CD8-positive, alpha-beta memory T cell (primary cell): ENCODE measurements at regions of chr4 and their contacts with region 1.

Region 1: DNA sequence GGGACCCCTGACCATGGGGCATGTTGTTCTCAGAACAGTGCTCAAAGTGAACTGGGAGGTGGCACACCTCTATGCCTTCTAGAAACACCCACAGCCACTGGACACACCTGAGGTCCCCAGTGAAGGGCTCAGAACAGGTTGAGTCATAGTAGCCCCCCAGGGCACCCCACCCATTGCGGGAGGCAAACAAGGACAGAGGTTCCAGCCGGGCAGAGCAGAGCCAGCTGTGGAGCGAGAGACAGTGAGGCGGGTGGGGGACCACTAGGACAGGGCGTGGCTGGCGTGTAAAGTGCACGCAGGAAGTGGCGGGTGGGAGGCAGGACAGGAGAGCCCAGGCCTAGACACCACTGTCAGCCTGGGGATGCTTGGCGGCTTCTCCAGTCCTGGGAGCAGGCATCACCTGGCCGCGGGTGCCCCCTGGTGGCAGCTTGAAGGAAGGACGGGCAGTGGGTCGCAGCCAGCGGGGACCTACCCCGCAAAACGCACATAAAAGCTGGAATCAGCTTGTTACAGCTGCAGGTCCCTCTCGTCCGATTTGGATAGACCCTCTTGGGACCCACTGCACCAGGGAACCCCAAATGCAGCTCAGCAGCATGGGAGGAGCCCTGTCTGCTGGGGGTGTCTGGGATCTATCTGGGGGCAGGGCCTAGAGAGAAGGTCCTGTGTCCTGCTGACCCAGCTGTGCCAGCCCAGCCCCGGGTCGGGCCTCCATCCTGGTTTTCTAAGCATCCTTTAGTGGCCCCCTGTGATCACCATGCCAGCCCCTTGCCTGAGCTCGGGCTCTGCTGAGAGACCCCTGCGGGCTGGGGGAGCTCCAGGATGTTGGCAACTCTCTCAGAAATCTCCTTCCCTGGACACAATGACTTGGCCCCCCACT is 57.6 kb downstream of the WFS1 start:
- DNase-seq: peak; percentile 65 to 83 (median 71)
- H3K4me3 ChIP-seq: no peak overlapping the region
- H3K4me3 Mint-ChIP-seq: no peak overlapping the region
- H3K27ac ChIP-seq: no peak overlapping the region
- H3K27ac Mint-ChIP-seq: no peak overlapping the region
- H3K4me1 ChIP-seq: no peaks in the 10 kb centered on the region
- H3K4me1 Mint-ChIP-seq: no peaks in the 10 kb centered on the region
- H3K27me3 ChIP-seq: no peaks in the 10 kb centered on the region
- H3K27me3 Mint-ChIP-seq: peaks cover 11 to 47% of the 10 kb centered on the region in 2 donors

Region 2: GRCh38 chr4:5998333-5998936 is 328.8 kb before region 1 on chr4:
- CTCF ChIA-PET with region 1: interaction called, 35 read pairs
- POLR2A ChIA-PET with region 1: no interaction called
- DNase-seq: peak in 4 of 5 donors; percentile 11 to 39 (median 28)
- H3K4me3 ChIP-seq: no peak overlapping the region
- H3K4me3 Mint-ChIP-seq: no peak overlapping the region
- H3K27ac ChIP-seq: no peak overlapping the region
- H3K27ac Mint-ChIP-seq: no peak overlapping the region
- H3K4me1 ChIP-seq: no peaks in the 10 kb centered on the region
- H3K4me1 Mint-ChIP-seq: peaks cover 0 to 5% (median 0%) of the 10 kb centered on the region in 3 donors
- H3K27me3 ChIP-seq: no peaks in the 10 kb centered on the region
- H3K27me3 Mint-ChIP-seq: peaks cover 0 to 7% of the 10 kb centered on the region in 2 donors

Region 3: GRCh38 chr4:6264225-6264540 is 63.1 kb before region 1 on chr4:
- CTCF ChIA-PET with region 1: interaction called, 14 read pairs
- POLR2A ChIA-PET with region 1: interaction called, 3 read pairs
- DNase-seq: peak in 1 of 5 donors; percentile 53
- H3K4me3 ChIP-seq: no peak overlapping the region
- H3K4me3 Mint-ChIP-seq: no peak overlapping the region
- H3K27ac ChIP-seq: no peak overlapping the region
- H3K27ac Mint-ChIP-seq: no peak overlapping the region
- H3K4me1 ChIP-seq: no peaks in the 10 kb centered on the region
- H3K4me1 Mint-ChIP-seq: peaks cover 4 to 5% (median 4%) of the 10 kb centered on the region in 3 donors
- H3K27me3 ChIP-seq: peaks cover 5% of the 10 kb centered on the region
- H3K27me3 Mint-ChIP-seq: peaks cover 16 to 24% of the 10 kb centered on the region in 2 donors

Region 4: GRCh38 chr4:6608758-6609414 is 281.6 kb after region 1 on chr4:
- CTCF ChIA-PET with region 1: no interaction called
- POLR2A ChIA-PET with region 1: no interaction called
- DNase-seq: peak in 3 of 5 donors; percentile 3 to 54 (median 28)
- H3K4me3 ChIP-seq: no peak overlapping the region
- H3K4me3 Mint-ChIP-seq: peak overlapping the region in 3 of 7 donors; percentile 19 to 37 (median 29)
- H3K27ac ChIP-seq: no peak overlapping the region
- H3K27ac Mint-ChIP-seq: peak overlapping the region in 7 of 8 donors; percentile 38 to 95 (median 69)
- H3K4me1 ChIP-seq: no peaks in the 10 kb centered on the region
- H3K4me1 Mint-ChIP-seq: peaks cover 12 to 21% (median 20%) of the 10 kb centered on the region in 3 donors
- H3K27me3 ChIP-seq: no peaks in the 10 kb centered on the region
- H3K27me3 Mint-ChIP-seq: no peaks in the 10 kb centered on the region